Activated CD4-positive, alpha-beta T cell treated with anti-CD3 and anti-CD28 coated beads for 36 hours (primary cell): ENCODE measurements at regions of chr17 and their contacts with region 1.

Region 1: GRCh38 chr17:30824356-30825145 is at the start of gene CRLF3:
- DNase-seq: peak; percentile 95
- ATAC-seq: peak; percentile 91
- H3K4me3 Mint-ChIP-seq: peak within 1 kb of the TSS; percentile 95
- H3K27ac Mint-ChIP-seq: peak within 1 kb of the TSS; percentile 92
- H3K4me1 Mint-ChIP-seq: peaks cover 38% of the 10 kb centered on the region
- H3K27me3 Mint-ChIP-seq: no peaks in the 10 kb centered on the region
- total RNA-seq, gene CRLF3: 39.2 to 44.1 TPM

Region 2: GRCh38 chr17:30116661-30117551 is 707.6 kb before region 1 on chr17 and contains the start of gene NSRP1:
- CTCF ChIA-PET with region 1: interaction called, 3 read pairs
- POLR2A ChIA-PET with region 1: no interaction called
- intact Hi-C with region 1: loop called in 1 of 2 experiments (anchors 5 kb)
- DNase-seq: peak; percentile 97
- ATAC-seq: peak; percentile 95
- H3K4me3 Mint-ChIP-seq: peak within 1 kb of the TSS; percentile 90
- H3K27ac Mint-ChIP-seq: peak within 1 kb of the TSS; percentile 98
- H3K4me1 Mint-ChIP-seq: peaks cover 41% of the 10 kb centered on the region
- H3K27me3 Mint-ChIP-seq: no peaks in the 10 kb centered on the region
- total RNA-seq, gene NSRP1: 29.9 to 43.0 TPM

Region 3: DNA sequence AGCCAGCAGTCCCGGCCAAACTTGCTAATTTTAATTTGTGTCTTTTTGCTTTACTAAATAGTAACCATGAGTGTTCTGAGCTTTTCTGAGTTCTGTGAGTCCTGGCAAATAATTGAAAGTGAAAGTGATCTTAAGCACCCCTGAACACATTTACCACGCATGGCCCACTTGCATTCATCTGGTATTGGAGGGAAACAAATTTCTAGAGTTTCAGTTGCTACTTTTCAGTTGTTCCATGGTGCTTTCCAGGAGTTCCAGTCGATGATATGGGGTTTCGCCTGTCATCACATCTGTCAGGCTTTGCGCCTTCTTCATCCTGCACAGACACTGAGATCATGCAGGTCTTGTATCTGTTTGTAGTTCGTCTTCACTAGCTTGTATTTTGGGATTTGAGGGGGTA is 44.2 kb before region 1 on chr17:
- CTCF ChIA-PET with region 1: interaction called, 6 read pairs
- POLR2A ChIA-PET with region 1: interaction called, 4 read pairs
- intact Hi-C with region 1: loop called (anchors 2 to 5 kb)
- DNase-seq: peak; percentile 61
- ATAC-seq: peak; percentile 80
- H3K4me3 Mint-ChIP-seq: no peak overlapping the region
- H3K27ac Mint-ChIP-seq: peak overlapping the region; percentile 94
- H3K4me1 Mint-ChIP-seq: peaks cover 20% of the 10 kb centered on the region
- H3K27me3 Mint-ChIP-seq: no peaks in the 10 kb centered on the region

Region 4: GRCh38 chr17:30796016-30796415 is 28.5 kb before region 1 on chr17:
- CTCF ChIA-PET with region 1: interaction called, 4 read pairs
- POLR2A ChIA-PET with region 1: interaction called, 3 read pairs
- intact Hi-C with region 1: loop called in 1 of 2 experiments (anchors 1 kb)
- DNase-seq: no peak
- ATAC-seq: peak; percentile 99
- H3K4me3 Mint-ChIP-seq: no peak overlapping the region
- H3K27ac Mint-ChIP-seq: peak overlapping the region; percentile 86
- H3K4me1 Mint-ChIP-seq: peaks cover 28% of the 10 kb centered on the region
- H3K27me3 Mint-ChIP-seq: no peaks in the 10 kb centered on the region

Region 5: GRCh38 chr17:31313982-31314784 is 489.6 kb after region 1 on chr17 and contains the start of gene EVI2B:
- CTCF ChIA-PET with region 1: no interaction called
- POLR2A ChIA-PET with region 1: no interaction called
- intact Hi-C with region 1: loop called (anchors 5 kb)
- DNase-seq: peak; percentile 30
- ATAC-seq: peak; percentile 43
- H3K4me3 Mint-ChIP-seq: peak within 1 kb of the TSS; percentile 79
- H3K27ac Mint-ChIP-seq: peak within 1 kb of the TSS; percentile 93
- H3K4me1 Mint-ChIP-seq: peaks cover 48% of the 10 kb centered on the region
- H3K27me3 Mint-ChIP-seq: no peaks in the 10 kb centered on the region
- total RNA-seq, gene EVI2B: 10.3 to 14.8 TPM